ENCODE measurements at regions of chr11 and their contacts with region 1.

Region 1: DNA sequence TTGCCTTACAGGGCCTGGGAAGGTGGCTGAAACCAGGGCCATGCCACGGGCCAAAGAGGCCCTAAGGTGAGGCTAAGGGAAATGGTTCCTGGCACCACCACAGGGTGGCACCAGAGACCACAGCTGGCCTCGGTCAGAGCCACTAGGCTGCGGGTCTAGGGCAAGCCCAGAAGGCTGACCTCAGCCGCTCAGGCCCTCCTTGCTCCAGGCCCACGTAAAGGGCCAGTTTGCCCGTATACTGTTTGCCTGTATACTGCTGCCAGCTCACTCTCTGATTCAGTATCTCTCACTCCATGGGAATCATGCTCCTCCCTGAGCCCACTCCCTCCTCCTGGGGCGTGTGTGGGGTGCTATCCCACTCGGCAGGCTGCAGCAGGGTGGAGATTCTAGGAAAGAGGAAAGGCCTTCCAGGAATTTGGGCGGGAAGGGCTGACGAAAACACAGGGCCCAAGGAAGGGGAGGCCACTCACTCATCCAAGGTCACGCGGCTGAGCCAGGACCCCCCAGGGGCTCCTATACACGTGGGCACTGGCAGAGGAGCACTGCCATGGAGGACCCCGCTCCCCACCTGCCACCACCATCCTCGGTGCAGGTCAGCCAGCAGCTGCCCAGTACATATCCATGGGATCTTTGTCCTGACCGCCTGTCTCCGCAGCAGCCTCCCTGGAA is 62.4 kb downstream of the NECTIN1 start:
- DNase-seq: peak; percentile 79 to 87 (median 83)
- ATAC-seq: peak; percentile 89
- H3K4me3 ChIP-seq: no peak overlapping the region
- H3K27ac ChIP-seq: no peak overlapping the region
- H3K4me1 ChIP-seq: peaks cover 25% of the 10 kb centered on the region
- H3K27me3 ChIP-seq: no peaks in the 10 kb centered on the region
- CTCF ChIP-seq: peak; percentile 79 to 98 (median 97)
- POLR2A ChIP-seq: no peak

Region 2: DNA sequence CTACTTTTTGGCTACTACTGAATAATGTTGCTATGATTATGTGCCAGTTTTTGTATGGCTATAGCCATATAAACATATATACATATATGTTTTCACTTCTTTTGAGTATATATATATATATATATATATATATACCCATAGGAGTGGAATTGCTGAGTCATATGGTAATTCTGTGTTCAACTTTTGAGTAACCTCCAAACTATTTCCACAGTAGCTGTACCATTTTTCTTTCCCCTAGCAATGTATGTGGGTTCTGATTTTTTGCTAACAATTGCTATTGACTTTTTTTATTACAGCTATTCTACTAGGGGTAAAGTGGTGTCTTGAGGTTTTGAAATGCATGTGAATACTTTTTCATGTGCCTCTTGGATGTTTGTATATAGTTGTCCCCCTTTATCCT is 430.1 kb before region 1 on chr11:
- intact Hi-C with region 1: no loop called
- DNase-seq: no peak
- ATAC-seq: no peak
- H3K4me3 ChIP-seq: no peak overlapping the region
- H3K27ac ChIP-seq: no peak overlapping the region
- H3K4me1 ChIP-seq: no peaks in the 10 kb centered on the region
- H3K27me3 ChIP-seq: no peaks in the 10 kb centered on the region
- CTCF ChIP-seq: no peak
- POLR2A ChIP-seq: no peak

Region 3: DNA sequence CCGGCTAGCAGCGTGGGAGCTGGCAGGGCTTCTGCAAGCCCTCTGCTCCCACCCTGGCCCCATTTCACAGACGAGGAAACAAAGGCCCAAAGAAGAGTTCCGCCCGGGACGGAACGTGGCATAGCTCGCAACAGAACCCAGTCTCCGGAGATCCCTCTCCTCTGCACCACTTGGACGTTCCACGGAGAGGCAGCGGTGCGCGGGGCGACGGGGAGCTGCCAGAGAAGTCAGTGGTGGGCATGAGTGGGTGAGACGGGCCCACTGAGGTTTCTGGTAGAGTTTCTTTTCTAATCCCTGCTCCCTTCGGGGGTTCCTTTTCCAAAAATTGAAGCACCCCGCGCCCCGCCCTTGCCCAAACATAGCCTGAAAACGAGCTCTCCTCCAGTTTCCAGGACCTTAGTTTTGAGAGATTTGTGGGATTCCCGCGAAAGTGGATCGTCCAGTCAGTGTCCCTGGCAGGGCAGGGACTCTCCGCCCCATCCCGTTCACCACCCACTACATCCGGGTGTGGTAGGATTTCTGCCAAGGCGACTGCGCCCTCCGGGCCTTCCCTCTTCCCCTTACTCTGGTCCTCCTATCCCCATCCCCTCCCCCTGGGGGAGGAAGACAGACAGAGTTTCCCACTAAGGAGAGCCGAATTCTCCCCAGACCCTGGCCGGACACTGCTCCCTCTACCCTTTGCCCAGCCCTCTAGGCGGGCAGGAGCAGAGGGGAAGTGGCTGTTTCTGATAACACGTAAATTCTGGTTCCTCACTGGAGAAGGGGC is 63.2 kb after region 1 on chr11:
- intact Hi-C with region 1: loop called (anchors 5 kb)
- DNase-seq: peak; percentile 62 to 72 (median 71)
- ATAC-seq: peak; percentile 39
- H3K4me3 ChIP-seq: peak overlapping the region; percentile 20 to 38
- H3K27ac ChIP-seq: peak overlapping the region; percentile 89 to 95 (median 90)
- H3K4me1 ChIP-seq: peaks cover 41% of the 10 kb centered on the region
- H3K27me3 ChIP-seq: no peaks in the 10 kb centered on the region
- CTCF ChIP-seq: peak in 1 of 7 experiments; percentile 38
- POLR2A ChIP-seq: peak in 1 of 3 donors; percentile 30

Region 4: GRCh38 chr11:120013325-120014270 is 347.0 kb after region 1 on chr11:
- intact Hi-C with region 1: loop called (anchors 10 kb)
- DNase-seq: peak; percentile 59 to 73 (median 64)
- ATAC-seq: peak; percentile 83
- H3K4me3 ChIP-seq: no peak overlapping the region
- H3K27ac ChIP-seq: no peak overlapping the region
- H3K4me1 ChIP-seq: no peaks in the 10 kb centered on the region
- H3K27me3 ChIP-seq: no peaks in the 10 kb centered on the region
- CTCF ChIP-seq: peak; percentile 51 to 84 (median 73)
- POLR2A ChIP-seq: no peak

Region 5: GRCh38 chr11:120108154-120108865 is 441.7 kb after region 1 on chr11:
- intact Hi-C with region 1: loop called (anchors 5 kb)
- DNase-seq: peak; percentile 66 to 80 (median 75)
- ATAC-seq: peak; percentile 86
- H3K4me3 ChIP-seq: no peak overlapping the region
- H3K27ac ChIP-seq: no peak overlapping the region
- H3K4me1 ChIP-seq: no peaks in the 10 kb centered on the region
- H3K27me3 ChIP-seq: no peaks in the 10 kb centered on the region
- CTCF ChIP-seq: peak; percentile 95 to 100 (median 98)
- POLR2A ChIP-seq: no peak

Measured in body of pancreas (tissue), 4 donors.